ENCODE measurements at regions of chr10 and their contacts with region 1.

Region 1: GRCh38 chr10:98404571-98405359 is 10.2 kb downstream of the PYROXD2 start:
- DNase-seq: peak; percentile 76
- ATAC-seq: peak; percentile 85
- H3K4me3 ChIP-seq: peak overlapping the region; percentile 50
- H3K27ac ChIP-seq: peak overlapping the region; percentile 97
- H3K4me1 ChIP-seq: peaks cover 26% of the 10 kb centered on the region
- H3K27me3 ChIP-seq: no peaks in the 10 kb centered on the region
- CTCF ChIP-seq: no peak

Region 2: GRCh38 chr10:98262571-98262970 is 142.2 kb before region 1 on chr10:
- CTCF ChIA-PET with region 1: no interaction called
- POLR2A ChIA-PET with region 1: no interaction called
- intact Hi-C with region 1: loop called (anchors 10 kb)
- DNase-seq: peak; percentile 70
- ATAC-seq: peak; percentile 45
- H3K4me3 ChIP-seq: no peak overlapping the region
- H3K27ac ChIP-seq: no peak overlapping the region
- H3K4me1 ChIP-seq: peaks cover 25% of the 10 kb centered on the region
- H3K27me3 ChIP-seq: no peaks in the 10 kb centered on the region
- CTCF ChIP-seq: peak; percentile 68

Region 3: GRCh38 chr10:98331885-98332284 is 72.9 kb before region 1 on chr10:
- CTCF ChIA-PET with region 1: no interaction called
- POLR2A ChIA-PET with region 1: interaction called, 4 read pairs
- intact Hi-C with region 1: loop called (anchors 5 kb)
- DNase-seq: no peak
- ATAC-seq: no peak
- H3K4me3 ChIP-seq: no peak overlapping the region
- H3K27ac ChIP-seq: no peak overlapping the region
- H3K4me1 ChIP-seq: peaks cover 29% of the 10 kb centered on the region
- H3K27me3 ChIP-seq: no peaks in the 10 kb centered on the region
- CTCF ChIP-seq: peak; percentile 51; the same call in 1 of the 2 replicates

Region 4: GRCh38 chr10:98388101-98388655 is 16.6 kb before region 1 on chr10:
- CTCF ChIA-PET with region 1: no interaction called
- POLR2A ChIA-PET with region 1: interaction called, 10 read pairs
- intact Hi-C with region 1: no loop called
- DNase-seq: no peak
- ATAC-seq: no peak
- H3K4me3 ChIP-seq: no peak overlapping the region
- H3K27ac ChIP-seq: no peak overlapping the region
- H3K4me1 ChIP-seq: no peaks in the 10 kb centered on the region
- H3K27me3 ChIP-seq: no peaks in the 10 kb centered on the region
- CTCF ChIP-seq: no peak

Region 5: DNA sequence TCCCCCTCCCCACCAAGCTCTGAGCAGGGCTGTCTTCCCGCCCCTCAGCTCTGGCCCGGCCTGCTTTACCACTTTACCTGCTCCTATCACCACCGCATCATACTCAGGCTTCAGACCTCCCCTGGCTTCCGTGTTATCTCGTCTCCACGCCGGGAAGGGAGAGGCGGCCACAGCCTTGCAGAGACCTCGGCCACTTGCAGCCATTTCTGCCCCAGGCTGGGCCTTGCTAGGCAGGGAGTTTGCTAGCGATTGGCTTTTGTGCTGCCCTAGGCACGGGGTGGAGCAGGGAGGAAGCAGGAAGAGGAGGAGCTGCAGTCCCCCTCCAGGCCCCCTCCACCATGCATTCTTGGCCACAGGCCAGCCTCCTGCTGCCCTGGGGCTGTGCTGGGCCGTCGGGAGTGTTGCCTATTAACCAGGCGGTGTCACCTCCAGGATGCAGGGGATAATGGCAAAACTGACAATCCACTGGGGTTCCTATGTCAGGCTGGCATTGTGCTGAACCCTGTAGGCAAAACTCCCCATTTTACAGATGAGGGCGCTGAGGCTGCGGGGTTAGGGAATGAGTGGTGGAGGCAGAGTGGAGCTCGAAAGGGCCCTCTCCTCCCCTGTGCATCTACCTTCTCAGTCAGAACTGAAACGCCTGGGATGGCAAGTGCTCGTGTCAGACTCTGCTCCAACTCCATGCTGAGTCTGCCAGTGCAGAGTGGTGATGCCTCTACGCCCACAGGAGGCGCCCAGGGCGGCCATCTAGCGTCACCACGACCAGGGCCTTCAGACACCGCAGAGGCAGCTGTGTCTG is 10.4 kb after region 1 on chr10 and contains the start of gene PYROXD2:
- CTCF ChIA-PET with region 1: no interaction called
- POLR2A ChIA-PET with region 1: no interaction called
- intact Hi-C with region 1: loop called (anchors 1 kb)
- DNase-seq: peak; percentile 91
- ATAC-seq: peak; percentile 93
- H3K4me3 ChIP-seq: peak within 1 kb of the TSS; percentile 73
- H3K27ac ChIP-seq: peak within 1 kb of the TSS; percentile 49
- H3K4me1 ChIP-seq: peaks cover 15% of the 10 kb centered on the region
- H3K27me3 ChIP-seq: no peaks in the 10 kb centered on the region
- CTCF ChIP-seq: no peak
- total RNA-seq, gene PYROXD2: 3.1 and 9.4 TPM in 2 replicates

Region 6: GRCh38 chr10:98446661-98447221 is 42.0 kb after region 1 on chr10 and contains the start of gene HPS1:
- CTCF ChIA-PET with region 1: no interaction called
- POLR2A ChIA-PET with region 1: no interaction called
- intact Hi-C with region 1: loop called (anchors 1 kb)
- DNase-seq: peak; percentile 51
- ATAC-seq: peak; percentile 80
- H3K4me3 ChIP-seq: peak within 1 kb of the TSS; percentile 80
- H3K27ac ChIP-seq: no peak within 1 kb of the TSS
- H3K4me1 ChIP-seq: peaks cover 13% of the 10 kb centered on the region; the same call in 1 of the 2 replicates
- H3K27me3 ChIP-seq: no peaks in the 10 kb centered on the region
- CTCF ChIP-seq: no peak
- total RNA-seq, gene HPS1: 19.1 and 20.6 TPM in 2 replicates

Region 7: GRCh38 chr10:98460837-98461499 is 56.2 kb after region 1 on chr10:
- CTCF ChIA-PET with region 1: no interaction called
- POLR2A ChIA-PET with region 1: no interaction called
- intact Hi-C with region 1: loop called (anchors 2 kb)
- DNase-seq: peak; percentile 93
- ATAC-seq: peak; percentile 93
- H3K4me3 ChIP-seq: no peak overlapping the region
- H3K27ac ChIP-seq: peak overlapping the region; percentile 18
- H3K4me1 ChIP-seq: peaks cover 20% of the 10 kb centered on the region
- H3K27me3 ChIP-seq: no peaks in the 10 kb centered on the region
- CTCF ChIP-seq: no peak

Measured in PC-3 (cell line).